Panc1 (cell line): ENCODE measurements at regions of chr1 and their contacts with region 1.

Region 1: DNA sequence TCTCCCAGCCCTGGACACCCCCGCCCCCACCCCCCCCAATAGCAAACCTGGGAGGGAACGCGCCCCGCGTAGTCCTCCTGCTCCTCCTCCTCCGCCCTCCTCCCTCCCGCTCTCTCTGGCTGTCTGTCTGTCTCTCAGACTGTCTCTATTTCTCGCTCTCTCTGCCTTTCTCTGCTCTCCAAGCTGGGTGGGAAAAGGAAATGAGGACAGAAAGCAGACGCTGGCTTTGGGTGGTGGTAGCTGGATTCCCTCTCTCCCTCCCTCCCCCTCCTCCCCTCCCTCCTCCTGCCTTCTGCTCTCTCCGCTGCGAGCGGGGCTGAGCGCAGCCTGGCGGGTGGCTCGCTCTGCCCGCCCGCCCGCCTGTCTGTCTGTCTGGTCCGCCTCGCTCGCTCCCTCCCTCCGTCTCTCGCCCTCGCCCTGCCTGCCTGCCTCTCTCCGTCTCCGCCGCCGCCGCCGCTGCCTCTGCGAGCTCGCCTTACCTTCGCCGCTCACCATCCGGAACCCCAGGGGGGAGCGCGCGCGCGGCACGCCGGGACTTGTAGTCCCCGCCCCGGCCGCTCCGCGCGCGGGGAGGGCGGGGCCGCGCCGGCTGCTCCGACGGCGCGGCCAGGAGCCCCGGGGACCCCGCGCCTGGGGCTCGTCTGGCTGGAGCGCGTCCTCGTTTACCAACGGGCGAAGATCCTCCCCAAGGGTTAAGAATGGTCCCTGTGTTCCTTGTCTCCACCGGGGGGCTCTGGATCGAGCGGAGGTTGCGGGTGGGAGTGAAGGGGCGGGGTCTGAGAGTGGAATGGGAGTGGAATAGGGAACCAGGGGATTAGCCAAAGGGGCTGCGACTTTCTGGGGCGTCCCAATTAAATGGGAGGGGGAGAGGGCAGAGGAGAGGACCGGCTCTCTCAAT is at the start of gene AHDC1:
- DNase-seq: no peak
- ATAC-seq: peak; percentile 79
- H3K4me3 ChIP-seq: peak within 1 kb of the TSS; percentile 78 to 86
- H3K27ac ChIP-seq: peak within 1 kb of the TSS; percentile 58; the same call in 1 of the 2 replicates
- H3K4me1 ChIP-seq: peaks cover 44% of the 10 kb centered on the region
- H3K27me3 ChIP-seq: no peaks in the 10 kb centered on the region
- CTCF ChIP-seq: no peak
- total RNA-seq, gene AHDC1: 47.1 TPM

Region 2: DNA sequence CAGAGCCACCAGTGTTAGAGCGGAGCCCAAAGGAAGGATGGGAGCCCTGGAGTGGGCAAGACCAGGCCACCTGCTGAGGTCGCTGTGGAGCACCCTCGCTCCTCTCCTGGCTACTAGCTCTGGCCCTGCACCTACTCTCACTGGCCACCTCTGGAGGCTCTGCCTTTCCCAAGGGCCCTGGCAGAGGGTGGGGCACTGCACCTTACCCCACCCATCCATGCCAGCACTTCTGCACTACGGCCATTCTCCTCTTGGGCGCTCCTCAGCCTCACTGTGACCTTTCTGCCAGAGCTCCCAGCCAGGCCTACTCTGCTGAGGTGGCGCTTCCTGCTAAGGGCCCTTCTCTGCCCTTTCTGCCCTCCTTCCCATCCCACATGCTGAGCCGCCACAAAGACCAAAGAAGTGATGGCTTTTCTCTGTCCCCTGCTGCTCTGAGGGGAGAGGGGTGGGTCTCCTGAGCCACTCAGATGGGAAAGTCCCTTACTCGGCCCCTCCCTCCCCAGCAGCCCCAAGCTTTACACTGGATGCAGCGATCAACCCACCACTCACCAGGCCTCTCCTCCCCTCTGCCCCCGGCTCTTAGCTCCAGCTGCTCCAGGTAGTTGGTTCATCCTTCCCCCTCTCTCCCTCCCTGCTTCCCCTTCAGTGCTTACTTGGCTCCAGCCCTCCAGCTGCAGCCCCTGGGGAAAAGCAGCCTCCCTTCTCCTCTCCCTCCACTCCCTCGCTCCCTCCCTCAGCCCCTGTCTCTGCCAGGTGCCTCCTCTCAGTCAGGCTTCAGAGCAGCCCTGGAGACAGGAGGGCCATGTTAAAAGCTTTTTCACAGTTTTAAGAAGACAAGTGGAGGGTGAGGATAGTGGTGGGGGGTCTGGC is 296.8 kb before region 1 on chr1:
- CTCF ChIA-PET with region 1: interaction called, 3 read pairs
- POLR2A ChIA-PET with region 1: interaction called, 17 read pairs
- in situ Hi-C with region 1: no loop called
- intact Hi-C with region 1: no loop called
- DNase-seq: no peak
- ATAC-seq: peak; percentile 75
- H3K4me3 ChIP-seq: no peak overlapping the region
- H3K27ac ChIP-seq: no peak overlapping the region
- H3K4me1 ChIP-seq: no peaks in the 10 kb centered on the region
- H3K27me3 ChIP-seq: no peaks in the 10 kb centered on the region
- CTCF ChIP-seq: no peak; the same call in 1 of the 2 replicates

Region 3: GRCh38 chr1:27416387-27417111 is 187.4 kb before region 1 on chr1:
- CTCF ChIA-PET with region 1: interaction called, 9 read pairs
- POLR2A ChIA-PET with region 1: interaction called, 6 read pairs
- in situ Hi-C with region 1: loop called (anchors 10 kb)
- intact Hi-C with region 1: loop called (anchors 5 kb)
- DNase-seq: no peak
- ATAC-seq: peak; percentile 76
- H3K4me3 ChIP-seq: no peak overlapping the region
- H3K27ac ChIP-seq: no peak overlapping the region
- H3K4me1 ChIP-seq: peaks cover 11% of the 10 kb centered on the region
- H3K27me3 ChIP-seq: no peaks in the 10 kb centered on the region
- CTCF ChIP-seq: peak; percentile 83

Region 4: DNA sequence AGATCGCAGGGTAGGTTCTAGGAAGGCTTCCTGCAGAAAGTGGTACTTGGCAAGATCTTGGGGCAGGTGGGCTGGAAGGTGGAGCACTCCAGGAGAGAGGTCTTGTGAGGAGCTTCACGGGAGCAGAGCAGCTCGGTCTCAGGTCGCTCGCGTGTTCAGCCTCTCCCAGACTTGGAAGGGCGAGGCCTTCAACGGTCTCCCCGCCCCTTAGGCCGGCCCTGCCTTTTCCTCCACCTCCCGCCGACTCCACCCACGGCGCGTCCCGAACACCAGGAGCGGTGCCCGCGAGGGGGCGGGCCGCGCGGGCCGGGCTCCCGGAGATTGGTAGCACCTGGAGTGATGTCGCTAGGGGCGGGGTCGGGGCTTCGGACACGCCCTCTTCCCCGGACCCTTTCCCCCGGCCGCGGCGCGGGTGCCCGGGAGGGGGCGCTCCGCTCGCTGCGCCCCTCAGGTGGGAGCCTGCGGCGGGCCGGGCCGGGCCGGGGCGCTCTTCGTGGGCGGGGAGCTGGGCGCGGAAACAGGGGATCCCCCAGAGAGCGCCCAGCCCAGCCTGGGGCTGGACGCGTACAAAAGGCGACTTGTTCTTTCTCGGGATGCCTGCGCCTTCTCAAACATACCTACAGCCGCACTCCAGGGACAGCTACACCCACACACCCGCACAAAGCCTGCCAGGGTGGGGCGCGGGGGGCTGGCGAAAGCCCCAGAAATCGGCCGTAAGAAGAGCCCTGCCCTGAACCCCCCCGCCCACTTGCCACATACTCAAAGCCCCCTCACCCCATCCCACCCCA is 35.4 kb before region 1 on chr1:
- CTCF ChIA-PET with region 1: interaction called, 16 read pairs
- POLR2A ChIA-PET with region 1: interaction called, 3 read pairs
- in situ Hi-C with region 1: no loop called
- intact Hi-C with region 1: loop called (anchors 5 kb)
- DNase-seq: peak; percentile 70
- ATAC-seq: peak; percentile 85
- H3K4me3 ChIP-seq: peak overlapping the region; percentile 35 to 41
- H3K27ac ChIP-seq: peak overlapping the region; percentile 94
- H3K4me1 ChIP-seq: peaks cover 92% of the 10 kb centered on the region
- H3K27me3 ChIP-seq: no peaks in the 10 kb centered on the region
- CTCF ChIP-seq: peak; percentile 98

Region 5: DNA sequence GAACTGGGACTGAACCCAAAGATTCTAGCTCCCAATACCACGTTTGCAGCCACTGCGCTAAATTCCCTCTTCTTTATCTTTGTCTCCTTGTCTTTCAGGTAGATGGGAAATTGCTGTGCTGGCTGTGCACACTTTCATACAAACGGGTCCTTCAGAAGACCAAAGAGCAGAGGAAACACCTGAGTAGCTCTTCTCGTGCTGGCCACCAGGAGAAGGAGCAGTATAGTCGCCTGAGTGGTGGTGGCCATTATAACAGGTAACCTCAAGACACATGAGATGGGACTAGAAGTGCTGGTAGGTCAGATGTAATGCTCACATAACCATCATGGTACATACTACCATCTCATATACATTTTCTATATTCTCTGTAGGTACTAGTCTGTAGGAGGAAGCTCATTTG is 140.6 kb after region 1 on chr1:
- CTCF ChIA-PET with region 1: interaction called, 12 read pairs
- POLR2A ChIA-PET with region 1: no interaction called
- in situ Hi-C with region 1: no loop called
- intact Hi-C with region 1: no loop called
- DNase-seq: no peak
- ATAC-seq: no peak; the same call in 1 of the 2 replicates
- H3K4me3 ChIP-seq: no peak overlapping the region
- H3K27ac ChIP-seq: no peak overlapping the region
- H3K4me1 ChIP-seq: no peaks in the 10 kb centered on the region
- H3K27me3 ChIP-seq: no peaks in the 10 kb centered on the region
- CTCF ChIP-seq: no peak